Ovary (tissue), 10 donors: ENCODE measurements at regions of chr17 and their contacts with region 1.

Region 1: DNA sequence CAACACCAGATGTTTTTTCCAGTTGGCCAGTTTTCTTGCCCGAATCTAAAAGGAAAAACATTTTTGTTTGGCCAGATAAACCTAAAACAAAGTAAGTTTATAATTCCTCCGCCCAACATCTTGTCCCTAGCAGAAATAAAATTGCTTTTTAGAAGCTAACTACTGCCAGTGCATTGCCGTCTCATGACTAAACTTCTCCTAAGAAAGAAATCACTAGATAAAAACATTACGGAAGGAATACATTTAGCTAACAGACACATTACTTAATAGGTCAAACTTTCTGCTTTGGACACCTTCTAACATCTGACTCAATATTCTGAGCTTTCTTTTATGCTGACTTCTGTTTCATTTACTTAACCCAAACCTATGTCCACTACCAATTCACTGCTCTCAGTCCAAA is 36.2 kb downstream of the FBXL20 start:
- DNase-seq: no peak
- H3K4me3 ChIP-seq: no peak overlapping the region
- H3K27ac ChIP-seq: no peak overlapping the region
- H3K4me1 ChIP-seq: peaks cover 5% of the 10 kb centered on the region
- H3K27me3 ChIP-seq: no peaks in the 10 kb centered on the region
- CTCF ChIP-seq: no peak
- EP300 ChIP-seq: no peak
- POLR2A ChIP-seq: no peak

Region 2: GRCh38 chr17:39294060-39294459 is 71.2 kb before region 1 on chr17:
- intact Hi-C with region 1: no loop called
- DNase-seq: no peak
- H3K4me3 ChIP-seq: no peak overlapping the region
- H3K27ac ChIP-seq: no peak overlapping the region
- H3K4me1 ChIP-seq: no peaks in the 10 kb centered on the region
- H3K27me3 ChIP-seq: no peaks in the 10 kb centered on the region
- CTCF ChIP-seq: no peak
- EP300 ChIP-seq: no peak
- POLR2A ChIP-seq: no peak

Region 3: GRCh38 chr17:39385040-39385439 is 19.8 kb after region 1 on chr17:
- intact Hi-C with region 1: loop called in 1 of 4 experiments (anchors 2 kb)
- DNase-seq: no peak
- H3K4me3 ChIP-seq: no peak overlapping the region
- H3K27ac ChIP-seq: no peak overlapping the region
- H3K4me1 ChIP-seq: peaks cover 1% of the 10 kb centered on the region
- H3K27me3 ChIP-seq: no peaks in the 10 kb centered on the region
- CTCF ChIP-seq: no peak
- EP300 ChIP-seq: no peak
- POLR2A ChIP-seq: no peak